SK-N-SH (cell line): ENCODE measurements at regions of chr3 and their contacts with region 1.

Region 1: GRCh38 chr3:4712143-4712542 is 219.0 kb downstream of the ITPR1 start:
- DNase-seq: no peak
- H3K4me3 ChIP-seq: no peak overlapping the region
- H3K27ac ChIP-seq: no peak overlapping the region
- H3K4me1 ChIP-seq: peaks cover 11 to 23% of the 10 kb centered on the region in 2 experiments; a peak in 2 of 4 replicates
- H3K27me3 ChIP-seq: no peaks in the 10 kb centered on the region
- CTCF ChIP-seq: no peak
- EP300 ChIP-seq: no peak
- RAD21 ChIP-seq: no peak

Region 2: GRCh38 chr3:4680881-4681300 is 31.3 kb before region 1 on chr3:
- CTCF ChIA-PET with region 1: interaction called, 10 read pairs
- POLR2A ChIA-PET with region 1: interaction called, 4 read pairs
- DNase-seq: no peak
- H3K4me3 ChIP-seq: no peak overlapping the region
- H3K27ac ChIP-seq: no peak overlapping the region; a peak in 1 of 4 replicates
- H3K4me1 ChIP-seq: peaks cover 0 to 7% of the 10 kb centered on the region in 2 experiments; a peak in 1 of 4 replicates
- H3K27me3 ChIP-seq: no peaks in the 10 kb centered on the region
- CTCF ChIP-seq: no peak
- EP300 ChIP-seq: no peak
- RAD21 ChIP-seq: no peak

Region 3: DNA sequence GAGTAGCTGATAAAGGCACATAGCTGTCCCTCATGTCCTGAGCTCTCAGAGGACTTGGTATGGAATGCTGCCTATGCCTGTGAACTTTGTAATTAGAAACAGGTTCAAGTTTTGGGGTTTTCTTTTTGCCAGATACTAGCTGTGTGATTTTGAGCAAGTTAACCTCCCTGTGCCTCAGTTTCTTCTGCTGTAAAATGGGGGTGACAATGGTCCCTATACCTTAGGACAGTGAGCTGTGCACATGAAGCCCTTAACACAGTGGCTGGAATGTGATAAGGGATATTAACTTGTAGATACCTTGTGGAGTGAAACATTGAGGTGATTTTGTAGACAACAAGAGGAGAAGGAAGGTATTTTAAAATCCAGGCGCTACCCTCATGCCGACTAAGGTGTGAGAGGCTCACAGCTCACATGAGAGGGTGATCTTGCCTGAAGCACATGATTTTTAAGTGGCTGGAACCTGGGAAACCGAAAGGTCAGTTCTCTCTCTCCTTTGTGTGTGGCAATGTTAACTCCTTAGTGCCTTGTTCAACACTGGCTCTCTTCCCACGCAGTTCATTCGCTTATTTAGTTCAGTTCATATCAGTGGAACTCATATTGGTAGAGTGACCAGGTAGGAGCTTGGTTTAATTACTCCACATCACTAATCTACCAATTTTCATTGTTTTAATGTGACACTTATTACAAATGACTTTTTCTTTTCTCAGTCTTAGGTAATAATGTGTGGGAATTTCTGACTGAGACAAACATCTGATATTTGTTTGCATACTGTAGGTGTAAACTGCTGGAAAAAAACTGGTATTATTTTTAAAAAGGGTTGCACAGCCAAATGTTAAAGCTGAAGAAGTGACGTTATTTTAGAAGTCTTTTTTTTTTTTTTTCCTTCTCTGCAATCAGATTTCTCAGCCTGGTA is 17.2 kb after region 1 on chr3:
- CTCF ChIA-PET with region 1: interaction called, 11 read pairs
- POLR2A ChIA-PET with region 1: no interaction called
- DNase-seq: no peak
- H3K4me3 ChIP-seq: no peak overlapping the region
- H3K27ac ChIP-seq: no peak overlapping the region
- H3K4me1 ChIP-seq: peaks cover 0 to 14% of the 10 kb centered on the region in 2 experiments; a peak in 2 of 4 replicates
- H3K27me3 ChIP-seq: no peaks in the 10 kb centered on the region
- CTCF ChIP-seq: no peak
- EP300 ChIP-seq: no peak
- RAD21 ChIP-seq: no peak

Region 4: GRCh38 chr3:4780545-4780957 is 68.4 kb after region 1 on chr3:
- CTCF ChIA-PET with region 1: no interaction called
- POLR2A ChIA-PET with region 1: no interaction called
- DNase-seq: no peak
- H3K4me3 ChIP-seq: no peak overlapping the region
- H3K27ac ChIP-seq: no peak overlapping the region
- H3K4me1 ChIP-seq: peaks cover 0 to 5% of the 10 kb centered on the region in 2 experiments; a peak in 1 of 4 replicates
- H3K27me3 ChIP-seq: no peaks in the 10 kb centered on the region
- CTCF ChIP-seq: no peak
- EP300 ChIP-seq: no peak
- RAD21 ChIP-seq: no peak

Region 5: DNA sequence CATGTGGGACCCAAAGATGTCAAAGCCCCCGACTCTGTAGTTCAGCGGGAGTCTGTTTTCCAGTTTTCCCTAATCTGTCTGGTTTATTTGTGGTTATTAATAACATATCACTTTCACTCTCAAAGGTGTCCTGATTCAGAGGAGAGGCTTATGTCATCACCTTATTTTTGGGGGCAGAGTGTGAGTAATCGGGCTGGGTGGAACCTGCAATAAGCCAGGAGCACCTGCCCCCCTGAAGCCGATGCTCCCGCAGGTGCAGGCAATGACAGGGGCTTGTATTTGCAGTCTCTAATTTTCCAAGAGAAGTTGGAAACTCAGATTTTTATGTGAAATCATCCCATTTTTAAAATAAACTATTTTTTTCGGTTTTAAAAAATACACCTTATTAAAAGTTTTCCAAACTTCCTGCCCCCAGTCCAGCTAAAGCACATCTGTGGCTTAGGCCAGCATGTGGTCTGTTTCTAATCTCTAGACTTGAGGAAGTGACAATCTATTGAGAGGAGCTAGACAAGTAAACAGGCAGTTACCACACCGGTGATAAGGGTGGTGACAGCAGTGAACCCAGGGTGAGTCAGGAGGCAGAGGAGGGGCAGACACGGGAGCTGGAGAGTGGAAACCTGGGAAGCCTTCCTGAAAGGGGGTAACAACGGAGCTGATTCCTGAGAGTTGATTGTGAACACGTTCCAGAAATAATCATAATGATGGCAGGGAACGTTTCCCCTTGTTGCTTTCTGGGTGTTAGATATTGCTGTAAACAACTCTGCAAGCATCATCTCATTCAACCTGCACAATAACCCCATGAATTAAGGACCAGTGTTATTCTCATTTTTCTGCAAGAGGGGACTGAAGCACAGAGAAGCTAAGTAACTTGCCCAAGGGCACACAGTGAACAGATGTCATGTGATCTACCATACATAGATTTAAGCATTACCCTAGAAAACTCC is 304.3 kb after region 1 on chr3:
- CTCF ChIA-PET with region 1: interaction called, 12 read pairs
- POLR2A ChIA-PET with region 1: no interaction called
- DNase-seq: no peak
- H3K4me3 ChIP-seq: no peak overlapping the region
- H3K27ac ChIP-seq: no peak overlapping the region
- H3K4me1 ChIP-seq: peaks cover 1 to 13% of the 10 kb centered on the region in 2 experiments; a peak in 1 of 4 replicates
- H3K27me3 ChIP-seq: no peaks in the 10 kb centered on the region
- CTCF ChIP-seq: no peak
- EP300 ChIP-seq: no peak
- RAD21 ChIP-seq: no peak

Region 6: DNA sequence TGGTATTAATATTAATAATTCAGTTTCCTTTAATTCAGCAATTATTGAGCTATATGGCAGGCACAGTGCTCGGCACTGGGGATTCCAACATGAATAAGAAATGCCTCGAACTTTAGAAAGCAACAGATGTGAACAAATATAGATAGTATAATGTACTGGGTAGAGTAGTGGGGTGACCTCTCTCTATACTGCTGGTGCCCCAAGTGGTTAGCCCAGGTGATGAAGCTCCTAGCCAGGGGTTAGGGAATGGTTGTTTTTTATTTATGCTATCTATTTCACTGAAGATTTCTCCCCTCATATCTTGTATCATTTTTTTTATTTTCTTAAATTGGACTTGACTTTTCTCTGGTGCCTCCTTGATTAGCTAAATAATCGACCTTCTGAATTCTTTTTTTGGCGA is 329.2 kb after region 1 on chr3:
- CTCF ChIA-PET with region 1: interaction called, 19 read pairs
- POLR2A ChIA-PET with region 1: no interaction called
- DNase-seq: no peak
- H3K4me3 ChIP-seq: no peak overlapping the region
- H3K27ac ChIP-seq: no peak overlapping the region
- H3K4me1 ChIP-seq: no peaks in the 10 kb centered on the region
- H3K27me3 ChIP-seq: no peaks in the 10 kb centered on the region
- CTCF ChIP-seq: no peak; the same call in 1 of the 2 replicates
- EP300 ChIP-seq: no peak
- RAD21 ChIP-seq: no peak